PC-9 (cell line): ENCODE measurements at regions of chr10 and their contacts with region 1.

Region 1: DNA sequence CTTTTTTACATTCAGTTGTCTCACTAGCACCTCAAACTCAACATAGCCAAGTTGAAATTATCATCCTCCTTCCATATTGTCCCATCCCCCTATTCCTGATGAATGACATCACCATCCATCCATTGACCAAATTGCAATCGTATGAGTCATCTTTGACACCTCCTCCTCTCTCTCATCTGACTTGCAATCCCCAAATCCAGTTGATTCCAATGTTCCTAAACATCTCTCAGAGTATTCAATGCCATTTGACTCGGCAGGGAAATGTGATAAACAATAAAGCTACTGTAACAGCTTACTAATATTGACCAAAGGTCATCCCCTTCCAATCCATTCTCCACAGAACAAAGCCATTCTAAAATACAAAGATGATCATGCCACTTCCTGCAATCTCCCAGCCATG is 1047.8 kb downstream of the NRG3 start:
- DNase-seq: no peak
- H3K4me3 ChIP-seq: no peak overlapping the region
- H3K27ac ChIP-seq: no peak overlapping the region
- H3K4me1 ChIP-seq: no peaks in the 10 kb centered on the region
- H3K27me3 ChIP-seq: no peaks in the 10 kb centered on the region
- CTCF ChIP-seq: no peak

Region 2: GRCh38 chr10:82535457-82535856 is 387.3 kb before region 1 on chr10:
- CTCF ChIA-PET with region 1: no interaction called
- POLR2A ChIA-PET with region 1: no interaction called
- intact Hi-C with region 1: no loop called
- DNase-seq: no peak
- H3K4me3 ChIP-seq: no peak overlapping the region
- H3K27ac ChIP-seq: no peak overlapping the region
- H3K4me1 ChIP-seq: no peaks in the 10 kb centered on the region
- H3K27me3 ChIP-seq: 0 out of 2 replicates have a peak, but pooled peaks cover 4% of the 10 kb centered on the region
- CTCF ChIP-seq: no peak

Region 3: DNA sequence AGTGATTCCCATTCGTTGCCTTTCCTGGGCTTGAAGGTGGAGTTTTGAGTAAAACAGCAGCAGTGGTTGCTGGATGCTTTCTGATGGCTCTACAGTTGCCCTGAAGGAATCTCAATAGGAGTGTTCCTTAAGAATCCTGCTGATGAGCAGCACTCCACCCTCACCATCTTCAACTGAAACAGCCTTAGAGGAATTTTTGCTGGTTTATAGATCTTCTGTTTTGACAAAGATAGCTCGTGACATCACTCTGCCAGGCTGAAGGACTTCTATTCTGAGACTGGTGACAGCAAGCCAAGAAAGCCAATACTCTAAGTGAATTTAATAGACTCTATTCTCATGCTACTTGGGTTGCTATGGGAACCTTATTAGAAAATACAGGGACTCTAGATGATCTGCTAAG is 33.0 kb before region 1 on chr10:
- CTCF ChIA-PET with region 1: interaction called, 10 read pairs
- POLR2A ChIA-PET with region 1: no interaction called
- intact Hi-C with region 1: no loop called
- DNase-seq: no peak
- H3K4me3 ChIP-seq: no peak overlapping the region
- H3K27ac ChIP-seq: no peak overlapping the region
- H3K4me1 ChIP-seq: no peaks in the 10 kb centered on the region
- H3K27me3 ChIP-seq: peaks cover 31% of the 10 kb centered on the region
- CTCF ChIP-seq: no peak

Region 4: GRCh38 chr10:83357627-83358026 is 434.9 kb after region 1 on chr10:
- CTCF ChIA-PET with region 1: no interaction called
- POLR2A ChIA-PET with region 1: no interaction called
- intact Hi-C with region 1: no loop called
- DNase-seq: no peak
- H3K4me3 ChIP-seq: no peak overlapping the region
- H3K27ac ChIP-seq: no peak overlapping the region
- H3K4me1 ChIP-seq: no peaks in the 10 kb centered on the region
- H3K27me3 ChIP-seq: no peaks in the 10 kb centered on the region
- CTCF ChIP-seq: no peak